Endothelial cell of umbilical vein (primary cell): ENCODE measurements at regions of chr7 and their contacts with region 1.

Region 1: DNA sequence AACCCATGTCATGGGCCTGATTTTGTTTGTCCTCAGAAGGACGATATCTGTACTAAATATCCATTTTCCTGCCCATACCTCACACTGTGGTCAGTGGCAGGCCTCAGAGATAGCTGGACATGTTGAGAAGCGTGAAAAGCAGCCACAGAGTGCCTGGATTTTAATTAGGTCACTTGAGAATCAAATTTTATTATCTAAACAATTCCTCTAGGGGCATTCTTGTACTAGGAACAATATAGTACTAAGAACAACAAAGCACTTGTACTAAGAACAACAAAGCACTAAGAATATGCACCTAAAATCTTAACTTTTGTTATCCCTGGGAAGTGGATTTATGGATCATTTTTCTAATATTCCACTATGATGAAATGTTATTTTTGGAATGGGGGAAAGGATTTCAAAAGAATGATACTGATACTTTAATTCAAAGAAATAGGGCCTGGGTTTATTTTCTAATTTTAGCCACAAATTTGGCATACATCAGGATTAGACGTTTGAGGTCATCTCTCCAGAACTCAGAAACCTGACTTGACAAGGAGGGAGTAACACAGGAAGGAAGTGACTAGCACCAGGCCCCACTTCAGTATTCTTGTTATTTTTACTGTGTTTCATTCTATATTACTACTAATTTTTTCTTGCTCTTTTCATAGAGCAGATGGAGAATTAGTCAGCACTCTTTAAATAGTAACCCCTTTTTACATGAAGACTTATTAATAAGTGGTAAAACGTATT is 112.2 kb downstream of the EXOC4 start:
- DNase-seq: peak; percentile 86
- H3K4me3 ChIP-seq: no peak overlapping the region
- H3K27ac ChIP-seq: peak overlapping the region; percentile 92
- H3K4me1 ChIP-seq: peaks cover 26% of the 10 kb centered on the region
- H3K27me3 ChIP-seq: no peaks in the 10 kb centered on the region
- CTCF ChIP-seq: no peak
- POLR2A ChIP-seq: no peak

Region 2: GRCh38 chr7:131633342-131633843 is 1731.7 kb before region 1 on chr7:
- CTCF ChIA-PET with region 1: no interaction called
- POLR2A ChIA-PET with region 1: no interaction called
- dilution Hi-C with region 1: no loop called
- intact Hi-C with region 1: loop called (anchors 5 kb)
- DNase-seq: peak; percentile 56
- H3K4me3 ChIP-seq: no peak overlapping the region
- H3K27ac ChIP-seq: peak overlapping the region; percentile 70
- H3K4me1 ChIP-seq: peaks cover 42% of the 10 kb centered on the region
- H3K27me3 ChIP-seq: no peaks in the 10 kb centered on the region
- CTCF ChIP-seq: no peak
- POLR2A ChIP-seq: no peak

Region 3: DNA sequence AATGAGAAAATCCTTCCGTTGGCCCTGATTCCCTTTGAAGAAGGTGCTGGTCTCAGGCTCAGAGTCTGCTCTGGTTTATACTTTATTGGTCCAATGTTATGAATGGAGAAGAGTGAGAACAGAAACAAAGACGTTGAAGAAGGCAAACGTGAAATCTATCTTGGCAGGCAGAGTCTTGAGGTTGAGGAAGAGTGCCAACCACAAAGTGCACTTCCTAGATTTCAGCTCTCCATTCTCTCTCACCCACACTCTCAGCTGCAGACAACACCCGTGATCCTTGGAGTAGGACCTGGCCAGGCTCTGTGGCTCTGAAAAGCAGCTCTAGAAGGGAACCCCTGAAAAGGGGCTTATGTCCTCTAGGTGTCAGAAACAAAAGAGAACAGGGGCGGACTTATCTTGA is 660.0 kb before region 1 on chr7:
- CTCF ChIA-PET with region 1: no interaction called
- POLR2A ChIA-PET with region 1: no interaction called
- dilution Hi-C with region 1: no loop called
- intact Hi-C with region 1: no loop called
- DNase-seq: no peak
- H3K4me3 ChIP-seq: no peak overlapping the region
- H3K27ac ChIP-seq: no peak overlapping the region
- H3K4me1 ChIP-seq: no peaks in the 10 kb centered on the region
- H3K27me3 ChIP-seq: peaks cover 2 to 3% of the 10 kb centered on the region in 2 experiments
- CTCF ChIP-seq: no peak
- POLR2A ChIP-seq: no peak

Region 4: GRCh38 chr7:133230591-133231194 is 134.4 kb before region 1 on chr7:
- CTCF ChIA-PET with region 1: no interaction called
- POLR2A ChIA-PET with region 1: no interaction called
- dilution Hi-C with region 1: no loop called
- intact Hi-C with region 1: loop called (anchors 1 kb)
- DNase-seq: peak; percentile 73
- H3K4me3 ChIP-seq: no peak overlapping the region
- H3K27ac ChIP-seq: no peak overlapping the region
- H3K4me1 ChIP-seq: peaks cover 9% of the 10 kb centered on the region
- H3K27me3 ChIP-seq: peaks cover 21 to 36% of the 10 kb centered on the region in 2 experiments
- CTCF ChIP-seq: peak; percentile 60 to 62
- POLR2A ChIP-seq: no peak

Region 5: DNA sequence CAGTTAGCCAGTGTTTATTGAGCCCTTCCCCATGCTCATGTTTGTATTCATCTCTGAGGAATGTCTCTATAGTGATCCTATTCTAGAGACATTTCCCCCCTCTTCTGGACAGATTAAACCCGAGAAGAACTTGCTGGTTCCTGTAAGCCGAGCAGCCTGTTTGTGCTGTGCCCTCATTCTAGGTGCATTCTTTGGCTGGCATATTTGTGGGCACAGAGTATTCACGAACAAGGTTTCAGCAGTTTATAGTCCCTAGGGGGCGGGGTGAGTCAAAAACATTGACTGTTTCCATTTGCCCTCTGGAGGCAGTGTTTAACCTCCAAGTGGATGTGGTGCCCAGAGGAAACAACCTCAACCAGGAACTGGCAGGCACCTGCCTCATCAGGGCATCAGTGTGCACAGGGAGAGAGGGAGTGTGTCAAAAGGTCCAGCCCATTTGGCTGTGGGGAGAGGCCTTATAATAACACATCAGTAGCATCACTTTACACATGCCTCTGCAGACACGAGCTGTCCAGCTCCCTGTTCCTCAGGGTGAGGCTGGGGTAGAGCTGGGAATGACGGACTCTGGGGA is 488.7 kb after region 1 on chr7:
- CTCF ChIA-PET with region 1: interaction called, 5 read pairs
- POLR2A ChIA-PET with region 1: no interaction called
- dilution Hi-C with region 1: no loop called
- intact Hi-C with region 1: loop called (anchors 5 kb)
- DNase-seq: peak; percentile 27
- H3K4me3 ChIP-seq: no peak overlapping the region
- H3K27ac ChIP-seq: no peak overlapping the region
- H3K4me1 ChIP-seq: peaks cover 15% of the 10 kb centered on the region
- H3K27me3 ChIP-seq: no peaks in the 10 kb centered on the region
- CTCF ChIP-seq: peak; percentile 30 to 34
- POLR2A ChIP-seq: no peak

Region 6: GRCh38 chr7:134016223-134016941 is 651.3 kb after region 1 on chr7:
- CTCF ChIA-PET with region 1: no interaction called
- POLR2A ChIA-PET with region 1: no interaction called
- dilution Hi-C with region 1: no loop called
- intact Hi-C with region 1: loop called (anchors 10 kb)
- DNase-seq: peak; percentile 57
- H3K4me3 ChIP-seq: no peak overlapping the region
- H3K27ac ChIP-seq: no peak overlapping the region
- H3K4me1 ChIP-seq: no peaks in the 10 kb centered on the region
- H3K27me3 ChIP-seq: no peaks in the 10 kb centered on the region
- CTCF ChIP-seq: peak; percentile 59 to 76
- POLR2A ChIP-seq: no peak